Activated T-helper 1 cell treated with anti-CD3 and anti-CD28 coated beads, Interleukin-12 subunit alpha, Interleukin-12 subunit beta, Interleukin-2, Interleukin-4 antibody, amounts not matched to agents 30 ng/mL and 10 ng/mL and 1 ng/mL, durations not matched to agents 14 hours and 24 hours and 36 hours (primary cell): ENCODE measurements at regions of chr11 and their contacts with region 1.

Region 1: GRCh38 chr11:90453525-90453924 is 230.7 kb upstream of the CHORDC1 start:
- DNase-seq: no peak
- H3K4me3 Mint-ChIP-seq: no peak overlapping the region
- H3K27ac Mint-ChIP-seq: no peak overlapping the region
- H3K4me1 Mint-ChIP-seq: no peaks in the 10 kb centered on the region
- H3K27me3 Mint-ChIP-seq: no peaks in the 10 kb centered on the region

Region 2: DNA sequence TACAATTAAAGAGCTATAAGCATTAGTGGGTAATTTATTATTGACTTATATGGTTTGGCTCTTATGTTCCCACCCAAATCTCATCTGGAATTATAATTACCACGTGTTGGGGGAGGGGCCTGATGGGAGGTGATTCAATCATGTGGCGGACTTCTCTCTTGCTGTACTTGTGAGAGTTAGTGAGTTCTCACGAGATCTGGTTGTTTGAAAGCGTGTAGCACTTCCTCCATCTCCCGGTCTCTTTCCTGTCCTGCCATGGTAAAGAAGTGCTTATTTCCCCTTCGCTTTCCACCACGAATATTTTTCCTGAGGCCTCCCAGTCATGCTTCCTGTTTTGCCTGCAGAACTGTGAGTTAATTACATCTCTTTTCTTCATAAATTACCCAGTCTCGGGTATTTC is 202.6 kb before region 1 on chr11:
- intact Hi-C with region 1: loop called (anchors 2 kb)
- DNase-seq: no peak
- H3K4me3 Mint-ChIP-seq: peak overlapping the region; percentile 73
- H3K27ac Mint-ChIP-seq: no peak overlapping the region
- H3K4me1 Mint-ChIP-seq: peaks cover 13% of the 10 kb centered on the region
- H3K27me3 Mint-ChIP-seq: peaks cover 10% of the 10 kb centered on the region

Region 3: DNA sequence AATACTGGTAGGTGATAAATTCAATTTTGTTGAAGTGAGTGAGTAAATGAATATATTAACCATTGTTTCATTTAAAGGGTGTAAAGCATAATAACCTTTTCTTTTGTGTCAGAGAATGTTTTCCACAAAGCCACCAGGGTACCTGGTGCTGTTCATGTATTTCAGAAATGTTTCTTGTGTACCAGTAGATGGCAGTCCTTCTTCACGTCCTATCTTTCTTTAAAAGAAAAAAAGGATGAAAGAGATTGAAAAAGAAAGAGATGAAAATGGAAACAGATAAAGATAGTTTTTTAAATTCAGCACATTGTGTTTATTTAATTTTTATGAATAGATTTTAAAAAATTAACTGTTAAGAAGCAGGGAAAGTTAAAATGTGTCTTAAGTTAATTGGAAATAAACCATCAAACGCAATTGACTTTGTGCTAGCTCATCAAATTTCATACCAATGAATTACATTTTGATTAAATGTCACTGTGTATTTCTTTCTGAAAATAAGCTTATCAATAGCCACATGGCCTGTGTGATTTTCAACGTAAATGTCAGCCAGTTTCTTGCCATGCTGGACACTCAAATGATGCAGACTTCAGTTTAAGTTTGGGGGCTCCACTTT is 165.2 kb before region 1 on chr11:
- intact Hi-C with region 1: loop called (anchors 2 kb)
- DNase-seq: no peak
- H3K4me3 Mint-ChIP-seq: no peak overlapping the region
- H3K27ac Mint-ChIP-seq: no peak overlapping the region
- H3K4me1 Mint-ChIP-seq: no peaks in the 10 kb centered on the region
- H3K27me3 Mint-ChIP-seq: no peaks in the 10 kb centered on the region

Region 4: DNA sequence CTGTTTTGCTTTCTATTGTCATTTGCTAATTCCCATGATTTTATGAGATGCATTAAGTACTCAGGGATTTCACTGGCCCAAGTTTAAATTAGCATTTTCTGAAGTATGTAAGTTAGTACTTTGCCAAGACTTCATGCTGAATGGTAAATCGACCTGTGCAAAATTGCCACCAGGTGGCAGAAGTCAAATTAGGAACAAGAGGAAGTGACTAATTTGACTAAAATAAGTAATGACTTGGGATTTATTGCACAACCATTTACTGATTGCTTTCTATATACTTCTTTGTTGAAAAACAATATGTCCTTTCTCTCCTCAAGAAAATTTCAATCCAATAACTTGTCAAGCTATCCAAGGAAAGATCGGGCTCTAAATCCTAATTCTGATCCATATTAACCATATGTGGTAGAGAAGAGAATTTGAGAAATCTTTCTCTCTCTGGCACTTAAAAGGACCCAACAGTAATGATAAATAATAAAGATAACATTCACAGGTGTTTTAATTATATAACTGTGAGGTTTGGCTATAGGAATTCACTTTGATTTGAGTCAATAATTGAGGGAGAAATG is 23.0 kb after region 1 on chr11:
- intact Hi-C with region 1: no loop called
- DNase-seq: no peak
- H3K4me3 Mint-ChIP-seq: no peak overlapping the region
- H3K27ac Mint-ChIP-seq: no peak overlapping the region
- H3K4me1 Mint-ChIP-seq: no peaks in the 10 kb centered on the region
- H3K27me3 Mint-ChIP-seq: no peaks in the 10 kb centered on the region